Body of pancreas (tissue), 4 donors: ENCODE measurements at regions of chr6 and their contacts with region 1.

Region 1: GRCh38 chr6:144582939-144583613 is 297.9 kb downstream of the UTRN start:
- DNase-seq: peak; percentile 15 to 33 (median 22)
- ATAC-seq: no peak
- H3K4me3 ChIP-seq: no peak overlapping the region
- H3K27ac ChIP-seq: no peak overlapping the region
- H3K4me1 ChIP-seq: peaks cover 7% of the 10 kb centered on the region
- H3K27me3 ChIP-seq: no peaks in the 10 kb centered on the region
- CTCF ChIP-seq: no peak
- POLR2A ChIP-seq: no peak

Region 2: GRCh38 chr6:144931172-144932035 is 348.3 kb after region 1 on chr6:
- intact Hi-C with region 1: loop called (anchors 10 kb)
- DNase-seq: peak; percentile 49 to 71 (median 61)
- ATAC-seq: peak; percentile 68
- H3K4me3 ChIP-seq: no peak overlapping the region
- H3K27ac ChIP-seq: no peak overlapping the region
- H3K4me1 ChIP-seq: no peaks in the 10 kb centered on the region
- H3K27me3 ChIP-seq: no peaks in the 10 kb centered on the region
- CTCF ChIP-seq: peak; percentile 49 to 67 (median 61)
- POLR2A ChIP-seq: no peak

Region 3: DNA sequence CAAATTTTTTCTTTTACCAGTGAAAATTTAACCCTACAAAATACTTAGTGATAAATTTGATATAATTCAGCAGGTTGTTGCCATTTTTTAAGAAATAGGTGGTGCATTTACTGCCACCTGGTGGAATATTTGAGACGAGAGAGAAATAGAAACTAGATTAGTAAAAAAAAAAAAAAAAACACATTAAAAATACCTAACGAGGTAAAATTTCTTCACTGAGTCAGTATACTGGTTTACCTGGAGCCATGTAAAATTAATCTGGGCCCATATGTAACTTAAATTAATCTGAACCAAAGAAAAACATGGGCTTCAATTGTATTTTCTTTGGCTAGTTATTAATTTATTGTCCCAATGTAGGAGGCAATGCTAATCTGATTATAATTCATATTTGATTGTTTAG is 631.5 kb after region 1 on chr6:
- intact Hi-C with region 1: loop called (anchors 10 kb)
- DNase-seq: peak in 1 of 4 donors; percentile 29
- ATAC-seq: no peak
- H3K4me3 ChIP-seq: no peak overlapping the region
- H3K27ac ChIP-seq: no peak overlapping the region
- H3K4me1 ChIP-seq: no peaks in the 10 kb centered on the region
- H3K27me3 ChIP-seq: no peaks in the 10 kb centered on the region
- CTCF ChIP-seq: peak; percentile 13 to 76 (median 54)
- POLR2A ChIP-seq: no peak